Caco-2 (cell line): ENCODE measurements at regions of chr7 and their contacts with region 1.

Region 1: GRCh38 chr7:100604028-100604975 is 2.1 kb downstream of the PCOLCE start:
- DNase-seq: peak; percentile 86 to 89
- H3K4me3 ChIP-seq: peak overlapping the region; percentile 67
- H3K4me3 Mint-ChIP-seq: peak overlapping the region; percentile 91
- H3K27ac Mint-ChIP-seq: peak overlapping the region; percentile 74
- H3K4me1 ChIP-seq: peaks cover 16% of the 10 kb centered on the region
- H3K4me1 Mint-ChIP-seq: no peaks in the 10 kb centered on the region
- H3K27me3 ChIP-seq: no peaks in the 10 kb centered on the region
- H3K27me3 Mint-ChIP-seq: no peaks in the 10 kb centered on the region
- CTCF ChIP-seq: peak; percentile 54 to 74

Region 2: DNA sequence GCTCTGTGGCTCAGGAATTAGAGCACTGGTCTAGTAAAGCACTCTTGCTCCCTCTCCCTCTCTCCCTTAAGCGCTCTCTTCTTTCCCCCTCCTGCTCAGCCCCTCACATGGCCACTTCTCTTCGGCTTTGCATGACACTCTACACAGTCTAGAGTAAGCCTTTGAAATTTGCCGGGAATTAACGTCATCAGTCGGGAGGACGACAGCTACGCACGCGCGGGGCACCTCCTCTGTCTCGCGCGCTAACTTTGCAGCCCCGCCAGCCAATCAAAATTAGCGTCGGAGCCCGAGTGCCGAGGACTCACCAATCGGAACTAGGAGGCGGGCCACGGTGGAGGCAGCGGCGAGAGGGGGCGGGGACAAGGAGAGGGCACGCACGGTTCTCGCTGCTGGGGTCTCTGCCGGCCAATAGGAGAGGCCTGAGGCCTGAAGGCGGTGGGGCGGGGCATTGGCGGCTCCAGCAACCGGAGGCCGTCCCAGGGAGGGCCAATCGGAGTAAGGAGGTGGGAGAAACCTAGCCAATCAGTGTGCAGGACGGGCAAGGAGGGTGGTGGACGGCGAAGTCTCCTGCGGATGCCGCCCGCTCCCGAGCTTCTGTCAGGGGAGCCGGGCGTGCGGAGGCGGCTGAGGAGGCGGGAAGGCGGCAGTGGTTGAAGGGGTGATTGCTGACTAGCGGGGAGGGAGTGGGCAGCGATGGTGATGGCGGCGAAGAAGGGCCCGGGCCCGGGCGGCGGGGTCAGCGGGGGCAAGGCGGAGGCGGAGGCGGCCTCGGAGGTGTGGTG is 65.5 kb before region 1 on chr7 and contains the start of gene AGFG2:
- CTCF ChIA-PET with region 1: no interaction called
- POLR2A ChIA-PET with region 1: no interaction called
- intact Hi-C with region 1: loop called (anchors 1 kb)
- DNase-seq: peak; percentile 100
- H3K4me3 ChIP-seq: peak within 1 kb of the TSS; percentile 89
- H3K4me3 Mint-ChIP-seq: peak within 1 kb of the TSS; percentile 87
- H3K27ac Mint-ChIP-seq: peak within 1 kb of the TSS; percentile 72
- H3K4me1 ChIP-seq: peaks cover 37% of the 10 kb centered on the region
- H3K4me1 Mint-ChIP-seq: peaks cover 22% of the 10 kb centered on the region
- H3K27me3 ChIP-seq: no peaks in the 10 kb centered on the region
- H3K27me3 Mint-ChIP-seq: no peaks in the 10 kb centered on the region
- CTCF ChIP-seq: no peak
- total RNA-seq, gene AGFG2: 58.5 and 60.7 TPM in 2 replicates

Region 3: GRCh38 chr7:100673300-100673941 is 69.1 kb after region 1 on chr7 and contains the start of gene GNB2:
- CTCF ChIA-PET with region 1: interaction called, 3 read pairs
- POLR2A ChIA-PET with region 1: no interaction called
- intact Hi-C with region 1: loop called (anchors 2 kb)
- DNase-seq: peak; percentile 100
- H3K4me3 ChIP-seq: peak within 1 kb of the TSS; percentile 100
- H3K4me3 Mint-ChIP-seq: peak within 1 kb of the TSS; percentile 85
- H3K27ac Mint-ChIP-seq: peak within 1 kb of the TSS; percentile 94
- H3K4me1 ChIP-seq: no peaks in the 10 kb centered on the region
- H3K4me1 Mint-ChIP-seq: no peaks in the 10 kb centered on the region
- H3K27me3 ChIP-seq: no peaks in the 10 kb centered on the region
- H3K27me3 Mint-ChIP-seq: no peaks in the 10 kb centered on the region
- CTCF ChIP-seq: no peak
- total RNA-seq, gene GNB2: 200 and 216 TPM in 2 replicates

Region 4: DNA sequence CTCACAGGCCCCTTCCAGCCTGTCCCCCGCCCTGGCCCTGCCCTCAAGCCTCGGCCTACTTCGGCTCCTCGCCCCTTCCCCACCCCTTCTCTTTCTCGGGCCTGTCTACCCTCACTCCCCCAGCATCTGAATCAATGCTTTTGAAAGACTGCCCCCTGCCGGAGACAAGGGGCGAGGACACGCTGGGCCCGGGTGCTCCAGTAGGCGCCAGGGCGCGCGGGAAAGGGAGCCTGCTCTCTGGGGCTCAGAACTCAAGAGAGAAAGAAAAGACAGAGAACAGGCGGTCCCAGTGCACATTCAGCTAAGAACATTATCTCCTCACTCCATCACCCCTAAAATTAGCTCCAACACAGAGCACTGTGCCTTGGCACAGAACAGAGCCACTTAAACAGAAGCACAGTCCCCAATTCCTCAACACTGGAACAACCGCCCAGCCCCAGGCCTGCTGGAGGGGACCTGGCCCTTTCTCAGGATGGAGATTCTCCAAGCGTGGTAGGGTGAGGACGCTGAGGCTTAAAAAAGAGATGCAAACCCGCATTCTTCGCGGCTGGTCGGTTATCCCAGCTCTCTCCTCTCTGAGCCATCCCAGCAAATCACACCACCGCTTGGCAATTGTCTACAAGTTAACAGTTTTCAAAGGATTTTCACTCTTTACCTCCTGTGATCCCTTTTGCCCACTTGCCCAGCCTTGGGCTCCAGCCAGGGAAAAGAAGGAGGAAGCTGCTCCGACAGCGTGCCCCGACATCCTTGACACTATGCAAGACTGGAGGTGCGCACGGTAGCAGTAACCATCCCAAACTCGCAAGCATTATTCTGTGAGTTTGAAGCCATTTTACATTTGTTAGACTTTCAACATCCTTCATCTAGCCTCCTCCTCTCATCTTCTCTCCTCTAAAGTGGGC is 87.6 kb after region 1 on chr7:
- CTCF ChIA-PET with region 1: interaction called, 10 read pairs
- POLR2A ChIA-PET with region 1: no interaction called
- intact Hi-C with region 1: loop called (anchors 2 kb)
- DNase-seq: peak in 1 of 2 experiments; percentile 77
- H3K4me3 ChIP-seq: peak overlapping the region; percentile 55
- H3K4me3 Mint-ChIP-seq: peak overlapping the region; percentile 96
- H3K27ac Mint-ChIP-seq: no peak overlapping the region
- H3K4me1 ChIP-seq: peaks cover 19% of the 10 kb centered on the region
- H3K4me1 Mint-ChIP-seq: peaks cover 18% of the 10 kb centered on the region
- H3K27me3 ChIP-seq: no peaks in the 10 kb centered on the region
- H3K27me3 Mint-ChIP-seq: no peaks in the 10 kb centered on the region
- CTCF ChIP-seq: peak; percentile 68 to 77

Region 5: GRCh38 chr7:100726996-100727761 is 122.9 kb after region 1 on chr7:
- CTCF ChIA-PET with region 1: no interaction called
- POLR2A ChIA-PET with region 1: no interaction called
- intact Hi-C with region 1: loop called (anchors 1 kb)
- DNase-seq: no peak
- H3K4me3 ChIP-seq: no peak overlapping the region
- H3K4me3 Mint-ChIP-seq: no peak overlapping the region
- H3K27ac Mint-ChIP-seq: no peak overlapping the region
- H3K4me1 ChIP-seq: 0 out of 2 replicates have a peak, but pooled peaks cover 5% of the 10 kb centered on the region
- H3K4me1 Mint-ChIP-seq: peaks cover 5% of the 10 kb centered on the region
- H3K27me3 ChIP-seq: no peaks in the 10 kb centered on the region
- H3K27me3 Mint-ChIP-seq: no peaks in the 10 kb centered on the region
- CTCF ChIP-seq: no peak

Region 6: GRCh38 chr7:100753750-100754149 is 149.4 kb after region 1 on chr7:
- CTCF ChIA-PET with region 1: no interaction called
- POLR2A ChIA-PET with region 1: no interaction called
- intact Hi-C with region 1: no loop called
- DNase-seq: no peak
- H3K4me3 ChIP-seq: no peak overlapping the region
- H3K4me3 Mint-ChIP-seq: no peak overlapping the region
- H3K27ac Mint-ChIP-seq: no peak overlapping the region
- H3K4me1 ChIP-seq: no peaks in the 10 kb centered on the region
- H3K4me1 Mint-ChIP-seq: no peaks in the 10 kb centered on the region
- H3K27me3 ChIP-seq: no peaks in the 10 kb centered on the region
- H3K27me3 Mint-ChIP-seq: peaks cover 15% of the 10 kb centered on the region
- CTCF ChIP-seq: no peak